CD8-positive, alpha-beta T cell (primary cell): ENCODE measurements at regions of chr9 and their contacts with region 1.

Region 1: DNA sequence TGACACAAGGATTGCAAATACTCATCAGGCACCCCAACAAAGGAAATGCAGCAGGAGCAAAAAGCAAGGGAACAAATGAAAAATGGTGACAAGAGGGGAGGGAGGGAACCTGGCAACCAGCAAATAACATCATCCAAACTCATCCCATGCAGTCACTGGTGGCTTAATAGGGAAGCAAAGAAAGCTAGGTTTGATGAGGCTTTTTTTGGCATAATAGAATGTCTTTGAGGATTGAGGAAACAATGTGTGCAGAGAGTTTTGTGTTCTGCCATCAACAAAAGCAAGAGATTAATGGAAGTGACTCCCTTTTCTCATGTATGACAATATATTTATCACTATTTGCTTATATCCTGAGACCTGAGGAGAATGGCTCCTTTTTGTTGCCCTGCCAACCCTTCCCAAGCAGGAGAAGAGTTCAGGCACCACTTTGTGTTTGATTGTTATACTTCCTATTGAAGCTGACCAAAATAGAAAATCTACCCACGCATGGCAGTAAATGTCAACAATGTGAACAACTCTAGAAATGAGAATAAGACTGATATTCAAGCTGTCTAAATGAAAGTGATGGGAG is 375.7 kb downstream of the CAAP1 start:
- DNase-seq: no peak
- ATAC-seq: no peak
- H3K4me3 ChIP-seq: no peak overlapping the region
- H3K4me3 Mint-ChIP-seq: no peak overlapping the region
- H3K27ac ChIP-seq: no peak overlapping the region
- H3K27ac Mint-ChIP-seq: no peak overlapping the region
- H3K4me1 ChIP-seq: no peaks in the 10 kb centered on the region
- H3K4me1 Mint-ChIP-seq: no peaks in the 10 kb centered on the region
- H3K27me3 ChIP-seq: no peaks in the 10 kb centered on the region
- H3K27me3 Mint-ChIP-seq: no peaks in the 10 kb centered on the region
- CTCF ChIP-seq: no peak

Region 2: GRCh38 chr9:26457151-26457550 is 59.7 kb before region 1 on chr9:
- CTCF ChIA-PET with region 1: no interaction called
- POLR2A ChIA-PET with region 1: no interaction called
- intact Hi-C with region 1: no loop called
- DNase-seq: no peak
- ATAC-seq: no peak
- H3K4me3 ChIP-seq: no peak overlapping the region
- H3K4me3 Mint-ChIP-seq: no peak overlapping the region
- H3K27ac ChIP-seq: no peak overlapping the region
- H3K27ac Mint-ChIP-seq: no peak overlapping the region
- H3K4me1 ChIP-seq: no peaks in the 10 kb centered on the region
- H3K4me1 Mint-ChIP-seq: no peaks in the 10 kb centered on the region
- H3K27me3 ChIP-seq: no peaks in the 10 kb centered on the region
- H3K27me3 Mint-ChIP-seq: no peaks in the 10 kb centered on the region
- CTCF ChIP-seq: no peak

Region 3: DNA sequence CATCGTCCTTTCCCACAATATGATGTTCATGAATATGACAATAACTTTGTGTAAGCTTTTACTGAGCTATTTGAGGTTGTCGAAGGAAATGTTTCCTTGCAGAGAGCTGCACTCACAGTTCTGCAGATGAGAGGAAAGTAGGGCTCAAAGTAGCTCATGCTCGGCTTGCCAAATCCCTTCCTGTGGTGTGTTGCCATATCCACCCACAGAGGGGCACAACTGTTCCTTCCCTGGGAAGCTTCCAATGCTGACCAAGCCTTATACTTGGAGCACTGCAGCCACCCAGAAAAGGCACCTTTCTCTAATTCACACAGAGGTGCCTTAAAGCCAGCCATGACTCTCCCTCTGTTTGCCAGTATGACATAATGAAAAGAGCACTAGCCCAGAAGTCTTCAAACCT is 14.5 kb before region 1 on chr9:
- CTCF ChIA-PET with region 1: interaction called, 3 read pairs
- POLR2A ChIA-PET with region 1: no interaction called
- intact Hi-C with region 1: loop called in 1 of 2 experiments (anchors 2 kb)
- DNase-seq: no peak
- ATAC-seq: no peak
- H3K4me3 ChIP-seq: no peak overlapping the region
- H3K4me3 Mint-ChIP-seq: no peak overlapping the region
- H3K27ac ChIP-seq: no peak overlapping the region
- H3K27ac Mint-ChIP-seq: no peak overlapping the region
- H3K4me1 ChIP-seq: no peaks in the 10 kb centered on the region
- H3K4me1 Mint-ChIP-seq: no peaks in the 10 kb centered on the region
- H3K27me3 ChIP-seq: no peaks in the 10 kb centered on the region
- H3K27me3 Mint-ChIP-seq: no peaks in the 10 kb centered on the region
- CTCF ChIP-seq: no peak

Region 4: DNA sequence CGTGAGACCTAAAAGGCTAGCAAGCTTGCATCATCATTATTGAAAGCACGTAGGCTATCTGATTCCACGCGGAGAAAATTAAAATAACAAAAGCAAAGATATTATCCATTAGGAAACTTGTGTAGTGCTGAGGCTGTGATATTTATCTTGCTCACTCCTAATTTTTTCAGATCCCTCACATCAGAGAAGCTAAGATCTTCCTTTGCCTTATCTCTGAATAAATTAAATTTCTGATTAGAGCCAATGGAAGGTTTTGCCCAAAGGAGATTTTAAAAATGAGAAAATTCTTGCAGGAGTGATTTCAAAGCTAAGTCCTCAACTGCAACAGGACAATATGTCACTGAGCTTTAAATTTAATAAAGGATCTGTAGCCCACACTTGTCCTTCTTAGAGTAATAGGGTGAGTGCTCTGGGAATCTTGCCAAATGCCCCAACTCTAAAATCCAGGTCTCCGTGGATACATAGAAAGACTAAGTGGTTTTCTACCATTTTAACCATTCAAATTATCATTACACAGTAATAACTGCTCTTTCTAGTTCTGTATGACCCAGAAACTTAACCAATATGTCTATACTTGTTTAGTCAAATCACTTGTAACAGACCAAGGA is 80.8 kb after region 1 on chr9:
- CTCF ChIA-PET with region 1: no interaction called
- POLR2A ChIA-PET with region 1: no interaction called
- intact Hi-C with region 1: no loop called
- DNase-seq: no peak
- ATAC-seq: no peak
- H3K4me3 ChIP-seq: no peak overlapping the region
- H3K4me3 Mint-ChIP-seq: no peak overlapping the region
- H3K27ac ChIP-seq: no peak overlapping the region
- H3K27ac Mint-ChIP-seq: no peak overlapping the region
- H3K4me1 ChIP-seq: no peaks in the 10 kb centered on the region
- H3K4me1 Mint-ChIP-seq: no peaks in the 10 kb centered on the region
- H3K27me3 ChIP-seq: no peaks in the 10 kb centered on the region
- H3K27me3 Mint-ChIP-seq: no peaks in the 10 kb centered on the region
- CTCF ChIP-seq: no peak

Region 5: GRCh38 chr9:28179893-28180292 is 1663.0 kb after region 1 on chr9:
- CTCF ChIA-PET with region 1: no interaction called
- POLR2A ChIA-PET with region 1: no interaction called
- intact Hi-C with region 1: loop called in 1 of 2 experiments (anchors 10 kb)
- DNase-seq: no peak
- ATAC-seq: no peak
- H3K4me3 ChIP-seq: no peak overlapping the region
- H3K4me3 Mint-ChIP-seq: no peak overlapping the region
- H3K27ac ChIP-seq: no peak overlapping the region
- H3K27ac Mint-ChIP-seq: no peak overlapping the region
- H3K4me1 ChIP-seq: no peaks in the 10 kb centered on the region
- H3K4me1 Mint-ChIP-seq: no peaks in the 10 kb centered on the region
- H3K27me3 ChIP-seq: no peaks in the 10 kb centered on the region
- H3K27me3 Mint-ChIP-seq: no peaks in the 10 kb centered on the region
- CTCF ChIP-seq: no peak